ENCODE measurements at regions of chr10 and their contacts with region 1.

Region 1: DNA sequence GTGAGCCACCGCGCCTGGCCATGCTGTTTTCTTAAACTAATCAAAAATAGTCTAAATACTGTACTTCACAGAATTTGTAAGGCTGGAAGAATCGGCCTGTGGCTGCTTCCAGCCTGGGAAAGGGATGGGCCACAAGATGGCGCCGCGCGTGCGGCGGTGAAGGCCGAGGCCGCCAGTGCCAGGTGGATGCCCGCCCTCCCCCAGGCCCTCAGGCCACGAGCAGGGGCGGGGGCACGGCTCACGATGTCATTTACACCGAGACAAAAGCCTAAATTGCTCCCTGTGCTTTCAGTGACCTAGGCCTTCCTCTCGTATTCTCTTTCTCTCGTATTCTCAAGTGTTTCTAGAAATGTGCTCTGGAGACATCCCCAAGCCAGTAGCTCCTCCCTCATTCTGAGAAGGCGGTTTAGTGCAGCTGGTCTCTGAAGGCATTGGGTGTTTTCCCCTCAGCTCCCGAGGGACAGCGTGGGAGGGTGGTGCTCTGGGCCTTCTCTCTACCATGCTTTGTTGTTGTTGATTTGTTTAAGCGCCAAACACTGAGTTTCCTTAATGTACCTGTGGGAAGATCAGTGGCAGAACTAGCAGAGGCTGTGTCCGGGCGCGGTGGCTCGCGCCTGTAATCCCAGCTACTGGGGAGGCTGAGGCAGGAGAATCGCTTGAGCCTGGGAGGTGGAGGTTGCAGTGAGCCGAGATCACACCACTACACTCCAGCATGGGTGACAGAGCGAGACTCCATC is 68.4 kb downstream of the CDC123 start:
- DNase-seq: peak; percentile 55 to 97 (median 78)

Region 2: GRCh38 chr10:12279281-12279680 is 14.9 kb after region 1 on chr10:
- intact Hi-C with region 1: no loop called
- DNase-seq: peak in 6 of 10 donors; percentile 14 to 85 (median 39)

Region 3: DNA sequence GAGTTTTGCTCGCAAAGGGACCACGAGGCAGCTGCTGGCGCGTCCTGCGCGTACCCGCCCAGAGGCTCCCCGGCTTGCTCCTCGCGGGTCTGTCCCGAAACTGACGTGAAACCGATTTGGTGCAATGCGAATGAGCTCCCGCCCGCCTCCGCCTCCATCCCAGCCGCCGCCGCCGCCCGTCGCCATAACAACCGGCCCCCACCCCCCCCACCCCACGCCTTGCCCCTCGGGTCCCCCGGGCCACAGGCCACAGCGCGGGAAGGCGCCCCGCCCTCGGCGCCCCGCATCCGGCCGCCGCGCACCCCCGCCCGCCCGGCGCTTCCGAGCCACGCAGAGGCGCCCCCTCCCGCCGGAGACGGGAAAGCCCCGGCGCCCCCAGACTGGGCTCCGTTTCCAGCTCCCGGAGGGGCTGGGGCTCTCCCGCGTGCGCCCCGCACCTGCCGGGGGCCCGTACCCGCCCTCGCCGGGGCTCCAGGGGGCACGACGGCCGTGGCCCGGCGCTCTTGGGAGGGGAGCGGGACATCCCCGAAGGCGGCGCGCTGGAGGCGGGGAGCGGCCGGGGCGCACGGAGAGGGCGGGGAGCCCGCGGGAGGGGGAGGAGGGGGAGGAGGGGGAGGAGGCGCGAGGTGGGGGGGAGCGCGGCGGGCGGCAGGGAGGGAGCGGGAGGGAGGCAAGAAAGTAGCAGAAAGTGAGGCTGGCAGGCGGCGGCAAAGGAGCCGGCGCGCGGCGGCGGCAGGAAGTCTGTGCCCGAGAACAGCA is 84.7 kb after region 1 on chr10 and contains the start of gene CAMK1D:
- intact Hi-C with region 1: loop called (anchors 5 kb)
- DNase-seq: peak; percentile 30 to 96 (median 72)

Region 4: GRCh38 chr10:12656518-12657142 is 392.3 kb after region 1 on chr10:
- intact Hi-C with region 1: loop called (anchors 1 kb)
- DNase-seq: no peak

Region 5: DNA sequence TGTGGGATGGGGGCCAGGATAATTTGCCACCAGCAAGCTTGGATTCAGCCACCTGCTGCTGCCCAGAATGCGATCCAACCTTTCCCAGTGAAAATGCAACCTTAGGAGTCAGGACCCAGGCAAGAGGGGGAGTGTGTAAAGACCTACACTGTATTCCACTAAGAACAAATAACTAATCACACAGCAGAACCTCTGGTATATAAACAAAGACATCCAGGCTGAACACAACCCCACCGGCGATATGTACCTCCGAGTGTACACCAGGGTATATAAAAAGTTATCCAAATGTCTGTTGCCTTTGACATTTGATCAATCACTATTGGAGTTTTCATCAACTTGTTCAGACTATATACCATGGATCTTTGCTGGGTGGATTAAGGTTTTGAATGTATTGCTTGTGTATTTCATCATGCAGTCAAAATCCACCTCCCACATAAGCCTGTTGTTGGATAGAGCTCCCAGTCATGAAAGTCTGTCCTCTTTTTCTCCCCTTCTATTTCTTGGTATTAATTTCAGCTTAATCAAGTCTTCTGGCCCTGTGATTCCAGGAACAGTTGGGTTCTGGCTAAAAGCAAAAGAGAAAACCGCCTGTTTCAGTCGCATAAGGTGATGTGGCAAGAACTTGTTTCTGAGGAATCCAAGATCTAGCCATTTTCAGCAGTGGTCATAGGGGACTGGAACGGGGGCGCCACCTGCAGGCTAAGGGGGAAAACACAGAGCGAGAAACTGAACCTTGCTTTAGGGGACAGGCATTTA is 446.4 kb after region 1 on chr10:
- intact Hi-C with region 1: loop called (anchors 1 kb)
- DNase-seq: peak; percentile 51 to 96 (median 75)

Region 6: DNA sequence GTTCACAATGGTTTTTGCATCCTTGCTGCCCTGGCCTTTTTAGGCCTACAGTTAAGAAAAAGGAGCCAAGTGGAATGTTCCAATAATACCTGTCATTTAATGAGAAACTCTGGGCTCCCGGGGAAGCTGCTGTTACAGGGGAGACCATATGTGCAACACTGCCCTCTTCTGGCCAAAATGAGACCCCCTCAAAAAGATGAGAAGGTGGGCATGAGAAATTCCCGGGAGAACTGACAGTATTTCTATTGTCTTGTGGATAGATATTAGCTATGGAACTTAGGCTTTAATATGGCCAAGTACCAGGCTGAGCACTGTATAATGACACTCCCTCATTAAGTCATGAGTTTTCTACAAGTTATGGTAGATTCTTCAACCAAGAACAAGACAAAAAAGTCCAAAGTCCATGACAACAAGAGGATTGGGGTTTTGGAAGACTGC is 637.8 kb after region 1 on chr10:
- intact Hi-C with region 1: loop called (anchors 5 kb)
- DNase-seq: peak in 4 of 10 donors; percentile 28 to 67 (median 51)

Region 7: GRCh38 chr10:13074561-13075451 is 810.4 kb after region 1 on chr10:
- intact Hi-C with region 1: loop called (anchors 2 kb)
- DNase-seq: peak; percentile 67 to 97 (median 79)

Measured in posterior cingulate gyrus (tissue), 11 donors.